ENCODE measurements at regions of chr17 and their contacts with region 1.

Region 1: GRCh38 chr17:35119368-35120165 is at the start of gene RAD51D:
- DNase-seq: peak; percentile 65
- H3K4me3 Mint-ChIP-seq: peak within 1 kb of the TSS; percentile 78
- H3K27ac Mint-ChIP-seq: peak within 1 kb of the TSS; percentile 89
- H3K4me1 Mint-ChIP-seq: peaks cover 23% of the 10 kb centered on the region
- H3K27me3 Mint-ChIP-seq: no peaks in the 10 kb centered on the region
- CTCF ChIP-seq: peak; percentile 94
- total RNA-seq, gene RAD51D: 9.6 and 13.0 TPM in 2 replicates

Region 2: GRCh38 chr17:34420254-34420766 is 699.3 kb before region 1 on chr17:
- CTCF ChIA-PET with region 1: interaction called, 33 read pairs
- POLR2A ChIA-PET with region 1: interaction called, 3 read pairs
- intact Hi-C with region 1: loop called (anchors 1 kb)
- DNase-seq: peak; percentile 63
- H3K4me3 Mint-ChIP-seq: no peak overlapping the region
- H3K27ac Mint-ChIP-seq: no peak overlapping the region
- H3K4me1 Mint-ChIP-seq: no peaks in the 10 kb centered on the region
- H3K27me3 Mint-ChIP-seq: peaks cover 1% of the 10 kb centered on the region
- CTCF ChIP-seq: peak; percentile 96

Region 3: GRCh38 chr17:34542700-34543336 is 576.7 kb before region 1 on chr17:
- CTCF ChIA-PET with region 1: interaction called, 26 read pairs
- POLR2A ChIA-PET with region 1: no interaction called
- intact Hi-C with region 1: loop called (anchors 2 kb)
- DNase-seq: peak; percentile 1
- H3K4me3 Mint-ChIP-seq: no peak overlapping the region
- H3K27ac Mint-ChIP-seq: no peak overlapping the region
- H3K4me1 Mint-ChIP-seq: no peaks in the 10 kb centered on the region
- H3K27me3 Mint-ChIP-seq: no peaks in the 10 kb centered on the region
- CTCF ChIP-seq: peak; percentile 68

Region 4: GRCh38 chr17:34990921-34991365 is 128.6 kb before region 1 on chr17:
- CTCF ChIA-PET with region 1: interaction called, 97 read pairs
- POLR2A ChIA-PET with region 1: no interaction called
- intact Hi-C with region 1: no loop called
- DNase-seq: no peak
- H3K4me3 Mint-ChIP-seq: no peak overlapping the region
- H3K27ac Mint-ChIP-seq: no peak overlapping the region
- H3K4me1 Mint-ChIP-seq: no peaks in the 10 kb centered on the region
- H3K27me3 Mint-ChIP-seq: no peaks in the 10 kb centered on the region
- CTCF ChIP-seq: no peak

Region 5: DNA sequence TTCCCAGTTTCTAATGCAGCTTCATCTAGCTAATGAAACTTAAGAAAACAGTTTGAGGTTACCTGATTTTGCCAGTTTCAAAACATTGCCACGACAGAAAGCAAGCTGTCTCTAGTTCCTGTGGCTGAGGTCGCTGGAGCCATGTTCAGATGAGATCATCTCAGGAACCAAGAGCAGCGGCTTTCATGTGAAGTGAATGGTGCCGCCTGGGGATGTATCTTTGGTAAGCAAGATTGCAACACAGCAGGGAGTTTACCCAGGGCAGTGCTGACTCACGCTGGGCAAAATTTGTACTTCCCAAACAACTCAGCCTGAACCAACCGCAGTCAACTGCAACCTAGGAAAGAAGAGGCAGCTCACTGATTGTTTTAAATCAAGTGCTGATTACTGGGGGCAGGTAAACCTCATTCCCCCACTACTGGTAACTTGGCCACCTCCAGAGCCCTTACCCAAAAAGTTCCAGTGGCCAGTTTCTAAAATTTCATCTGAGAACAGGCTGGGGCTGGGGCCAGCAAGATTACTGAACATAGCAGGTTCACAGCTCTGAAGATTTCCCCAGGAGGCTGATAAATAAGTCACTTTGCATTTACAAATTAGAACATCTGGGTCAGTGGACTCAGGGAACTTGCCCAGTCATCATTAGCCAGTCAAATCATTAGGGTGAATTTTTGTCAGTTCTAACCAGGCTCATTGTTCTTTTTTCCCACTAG is 55.9 kb before region 1 on chr17 and contains the start of gene RFFL:
- CTCF ChIA-PET with region 1: interaction called, 5 read pairs
- POLR2A ChIA-PET with region 1: interaction called, 4 read pairs
- intact Hi-C with region 1: loop called (anchors 2 kb)
- DNase-seq: peak; percentile 98
- H3K4me3 Mint-ChIP-seq: peak within 1 kb of the TSS; percentile 73
- H3K27ac Mint-ChIP-seq: peak within 1 kb of the TSS; percentile 95
- H3K4me1 Mint-ChIP-seq: peaks cover 26% of the 10 kb centered on the region
- H3K27me3 Mint-ChIP-seq: no peaks in the 10 kb centered on the region
- CTCF ChIP-seq: no peak
- total RNA-seq, gene RFFL: 22.0 and 22.6 TPM in 2 replicates

Region 6: GRCh38 chr17:35094902-35095301 is 24.7 kb before region 1 on chr17:
- CTCF ChIA-PET with region 1: interaction called, 24 read pairs
- POLR2A ChIA-PET with region 1: interaction called, 7 read pairs
- intact Hi-C with region 1: no loop called
- DNase-seq: peak; percentile 91
- H3K4me3 Mint-ChIP-seq: no peak overlapping the region
- H3K27ac Mint-ChIP-seq: peak overlapping the region; percentile 79
- H3K4me1 Mint-ChIP-seq: peaks cover 7% of the 10 kb centered on the region
- H3K27me3 Mint-ChIP-seq: no peaks in the 10 kb centered on the region
- CTCF ChIP-seq: no peak

Region 7: GRCh38 chr17:35254107-35254802 is 134.7 kb after region 1 on chr17:
- CTCF ChIA-PET with region 1: no interaction called
- POLR2A ChIA-PET with region 1: no interaction called
- intact Hi-C with region 1: no loop called
- DNase-seq: peak; percentile 98
- H3K4me3 Mint-ChIP-seq: peak overlapping the region; percentile 36
- H3K27ac Mint-ChIP-seq: peak overlapping the region; percentile 63
- H3K4me1 Mint-ChIP-seq: peaks cover 30% of the 10 kb centered on the region
- H3K27me3 Mint-ChIP-seq: peaks cover 7% of the 10 kb centered on the region
- CTCF ChIP-seq: no peak

Region 8: GRCh38 chr17:35449371-35449931 is 329.9 kb after region 1 on chr17:
- CTCF ChIA-PET with region 1: no interaction called
- POLR2A ChIA-PET with region 1: no interaction called
- intact Hi-C with region 1: no loop called
- DNase-seq: no peak
- H3K4me3 Mint-ChIP-seq: peak overlapping the region; percentile 78
- H3K27ac Mint-ChIP-seq: no peak overlapping the region
- H3K4me1 Mint-ChIP-seq: no peaks in the 10 kb centered on the region
- H3K27me3 Mint-ChIP-seq: no peaks in the 10 kb centered on the region
- CTCF ChIP-seq: no peak

Measured in MCF 10A (cell line).